ENCODE measurements at regions of chr1 and their contacts with region 1.

Region 1: GRCh38 chr1:8510041-8510823 is 192.3 kb downstream of the SLC45A1 start:
- DNase-seq: peak; percentile 47
- H3K4me3 Mint-ChIP-seq: peak overlapping the region; percentile 54
- H3K27ac Mint-ChIP-seq: peak overlapping the region; percentile 88
- H3K4me1 Mint-ChIP-seq: peaks cover 47% of the 10 kb centered on the region
- H3K27me3 Mint-ChIP-seq: no peaks in the 10 kb centered on the region

Region 2: GRCh38 chr1:8396786-8397406 is 113.3 kb before region 1 on chr1:
- intact Hi-C with region 1: loop called (anchors 5 kb)
- DNase-seq: no peak
- H3K4me3 Mint-ChIP-seq: no peak overlapping the region
- H3K27ac Mint-ChIP-seq: peak overlapping the region; percentile 71
- H3K4me1 Mint-ChIP-seq: peaks cover 63% of the 10 kb centered on the region
- H3K27me3 Mint-ChIP-seq: no peaks in the 10 kb centered on the region

Region 3: DNA sequence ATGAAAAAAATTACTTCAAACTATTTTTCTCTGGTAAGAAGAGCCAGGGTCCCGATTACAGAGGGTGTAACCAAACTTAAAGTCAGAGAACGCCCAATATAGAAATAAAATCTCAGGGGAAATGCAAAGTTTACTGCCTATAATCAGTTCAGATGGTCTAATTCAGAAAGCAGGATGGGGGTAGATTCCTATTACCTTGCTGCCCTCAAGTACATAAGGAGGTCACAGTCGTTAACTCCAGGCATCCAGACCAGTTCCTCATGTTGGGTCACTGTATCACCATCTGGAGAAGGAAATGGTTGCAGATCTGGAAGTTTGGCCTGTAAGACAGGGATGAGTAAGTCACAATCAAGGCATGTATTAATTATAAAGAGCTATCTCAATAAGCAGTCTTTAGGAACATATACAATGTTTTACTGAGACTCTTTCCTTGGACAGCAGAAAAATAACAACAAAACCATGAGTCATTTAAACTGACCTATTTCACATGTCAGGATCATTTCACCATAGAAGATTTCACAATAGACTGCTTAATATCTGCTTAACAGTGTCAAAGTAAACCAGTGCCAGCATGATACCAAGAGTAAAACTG is 12.9 kb before region 1 on chr1:
- intact Hi-C with region 1: loop called (anchors 2 kb)
- DNase-seq: no peak
- H3K4me3 Mint-ChIP-seq: no peak overlapping the region
- H3K27ac Mint-ChIP-seq: peak overlapping the region; percentile 67
- H3K4me1 Mint-ChIP-seq: peaks cover 34% of the 10 kb centered on the region
- H3K27me3 Mint-ChIP-seq: no peaks in the 10 kb centered on the region

Region 4: DNA sequence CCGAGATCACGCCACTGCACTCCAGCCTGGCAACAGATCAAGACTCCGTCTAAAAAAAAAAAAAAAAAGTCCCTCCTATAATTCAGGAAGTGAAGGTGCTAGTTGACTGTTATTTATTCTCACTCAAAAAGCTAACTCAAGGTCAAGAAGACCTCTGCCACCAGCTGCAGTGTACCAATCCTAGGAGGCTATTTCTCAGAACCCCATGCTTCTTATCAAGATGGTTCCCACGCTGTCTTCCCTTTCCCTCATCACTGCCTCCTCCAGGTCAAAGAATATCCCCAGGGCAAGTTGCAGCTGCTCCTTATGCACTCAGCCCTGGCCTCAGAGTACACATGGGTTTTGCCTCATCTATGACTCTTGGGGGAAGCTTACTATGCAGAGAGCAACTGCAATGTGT is 253.7 kb after region 1 on chr1:
- intact Hi-C with region 1: no loop called
- DNase-seq: no peak
- H3K4me3 Mint-ChIP-seq: no peak overlapping the region
- H3K27ac Mint-ChIP-seq: no peak overlapping the region
- H3K4me1 Mint-ChIP-seq: peaks cover 15% of the 10 kb centered on the region
- H3K27me3 Mint-ChIP-seq: no peaks in the 10 kb centered on the region

Measured in activated T-helper 1 cell treated with anti-CD3 and anti-CD28 coated beads, Interleukin-12 subunit alpha, Interleukin-12 subunit beta, Interleukin-2, Interleukin-4 antibody, amounts not matched to agents 30 ng/mL and 10 ng/mL and 1 ng/mL, durations not matched to agents 14 hours and 24 hours and 36 hours (primary cell).